IMR-90 (cell line): ENCODE measurements at regions of chr21 and their contacts with region 1.

Region 1: DNA sequence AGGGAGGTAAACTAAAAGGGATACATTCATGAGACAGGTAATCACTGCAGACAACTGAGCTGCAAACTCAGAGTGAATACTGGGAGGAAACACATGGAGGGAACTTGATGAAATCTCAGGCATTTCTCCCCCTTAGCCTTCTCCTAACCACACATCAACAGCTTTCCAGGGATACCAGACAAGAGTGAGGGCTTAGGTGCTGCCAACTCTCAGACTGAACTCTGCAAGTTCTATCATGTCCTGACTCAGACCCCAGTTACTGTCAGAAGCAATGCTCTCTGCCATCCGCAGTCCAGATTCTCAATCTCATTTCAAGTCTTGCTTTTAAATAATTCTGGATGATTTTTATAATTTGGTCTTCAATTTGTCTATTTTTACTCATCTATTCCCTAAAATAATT is 267.3 kb downstream of the LTN1 start:
- DNase-seq: no peak
- ATAC-seq: no peak
- H3K4me3 ChIP-seq: no peak overlapping the region
- H3K27ac ChIP-seq: no peak overlapping the region
- H3K4me1 ChIP-seq: 0 out of 2 replicates have a peak, but pooled peaks cover 2% of the 10 kb centered on the region
- H3K27me3 ChIP-seq: no peaks in the 10 kb centered on the region
- CTCF ChIP-seq: no peak
- POLR2A ChIP-seq: no peak
- RAD21 ChIP-seq: no peak

Region 2: DNA sequence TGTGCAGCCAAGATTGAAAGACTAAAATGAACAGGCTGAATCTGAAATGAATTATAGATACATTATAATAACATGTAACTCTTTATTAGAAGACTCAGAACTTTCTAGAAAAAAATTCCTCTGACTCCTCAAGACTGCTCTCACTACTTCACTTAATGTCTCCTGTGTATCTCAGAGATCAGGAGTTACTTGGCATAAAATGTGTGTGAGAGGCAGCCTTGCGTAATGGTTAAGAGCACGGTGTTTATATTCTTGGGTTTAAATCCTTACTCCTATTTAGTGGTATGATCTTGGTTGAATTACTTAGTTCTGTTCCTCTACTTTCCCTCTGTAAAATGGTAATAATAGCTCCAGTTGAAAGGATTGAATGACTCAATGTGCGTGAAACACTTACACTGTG is 367.7 kb before region 1 on chr21:
- CTCF ChIA-PET with region 1: no interaction called
- POLR2A ChIA-PET with region 1: no interaction called
- dilution Hi-C with region 1: no loop called
- in situ Hi-C with region 1: loop called (anchors 10 kb)
- intact Hi-C with region 1: no loop called
- DNase-seq: peak; percentile 38
- ATAC-seq: peak; percentile 40; the same call in 1 of the 2 replicates
- H3K4me3 ChIP-seq: no peak overlapping the region
- H3K27ac ChIP-seq: no peak overlapping the region
- H3K4me1 ChIP-seq: no peaks in the 10 kb centered on the region; the same call in none of the 2 replicates
- H3K27me3 ChIP-seq: no peaks in the 10 kb centered on the region
- CTCF ChIP-seq: no peak
- POLR2A ChIP-seq: no peak
- RAD21 ChIP-seq: no peak

Region 3: DNA sequence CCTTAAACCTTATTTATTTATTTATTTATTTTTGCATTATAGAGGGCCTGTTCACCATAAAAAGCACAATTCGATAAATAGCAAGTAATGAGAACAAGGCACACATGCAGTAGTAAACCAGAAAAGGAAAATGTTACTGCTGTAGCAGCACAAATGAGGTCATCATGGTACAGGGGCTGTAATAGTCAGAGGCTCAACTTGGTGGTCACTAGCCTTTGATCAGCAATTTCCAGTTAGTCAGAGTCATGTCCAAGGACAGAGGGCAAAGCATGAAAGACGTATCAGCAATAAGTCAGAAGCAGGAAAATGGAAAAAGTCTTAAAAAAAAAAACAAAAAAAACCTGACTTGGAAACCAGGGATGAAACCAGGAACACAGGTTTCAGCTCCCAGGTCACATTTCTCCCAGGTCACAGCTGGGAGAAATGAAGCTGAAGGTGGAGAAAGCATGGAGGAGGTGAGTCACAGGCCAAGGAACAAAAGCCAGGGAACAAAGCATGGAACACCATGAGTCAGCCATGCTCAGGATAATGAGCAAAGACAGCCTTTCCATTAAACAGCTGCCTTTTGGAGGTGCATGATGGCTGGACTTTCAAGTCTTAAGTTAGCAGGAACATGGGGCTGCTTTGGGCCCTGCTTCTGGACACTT is 289.0 kb before region 1 on chr21:
- CTCF ChIA-PET with region 1: no interaction called
- POLR2A ChIA-PET with region 1: no interaction called
- dilution Hi-C with region 1: no loop called
- in situ Hi-C with region 1: no loop called
- intact Hi-C with region 1: no loop called
- DNase-seq: peak; percentile 77
- ATAC-seq: 0 out of 2 replicates have a peak, but pooled peaks have one; percentile 30
- H3K4me3 ChIP-seq: no peak overlapping the region
- H3K27ac ChIP-seq: peak overlapping the region; percentile 37; the same call in 1 of the 2 replicates
- H3K4me1 ChIP-seq: peaks cover 10% of the 10 kb centered on the region
- H3K27me3 ChIP-seq: no peaks in the 10 kb centered on the region
- CTCF ChIP-seq: no peak
- POLR2A ChIP-seq: no peak
- RAD21 ChIP-seq: no peak

Region 4: DNA sequence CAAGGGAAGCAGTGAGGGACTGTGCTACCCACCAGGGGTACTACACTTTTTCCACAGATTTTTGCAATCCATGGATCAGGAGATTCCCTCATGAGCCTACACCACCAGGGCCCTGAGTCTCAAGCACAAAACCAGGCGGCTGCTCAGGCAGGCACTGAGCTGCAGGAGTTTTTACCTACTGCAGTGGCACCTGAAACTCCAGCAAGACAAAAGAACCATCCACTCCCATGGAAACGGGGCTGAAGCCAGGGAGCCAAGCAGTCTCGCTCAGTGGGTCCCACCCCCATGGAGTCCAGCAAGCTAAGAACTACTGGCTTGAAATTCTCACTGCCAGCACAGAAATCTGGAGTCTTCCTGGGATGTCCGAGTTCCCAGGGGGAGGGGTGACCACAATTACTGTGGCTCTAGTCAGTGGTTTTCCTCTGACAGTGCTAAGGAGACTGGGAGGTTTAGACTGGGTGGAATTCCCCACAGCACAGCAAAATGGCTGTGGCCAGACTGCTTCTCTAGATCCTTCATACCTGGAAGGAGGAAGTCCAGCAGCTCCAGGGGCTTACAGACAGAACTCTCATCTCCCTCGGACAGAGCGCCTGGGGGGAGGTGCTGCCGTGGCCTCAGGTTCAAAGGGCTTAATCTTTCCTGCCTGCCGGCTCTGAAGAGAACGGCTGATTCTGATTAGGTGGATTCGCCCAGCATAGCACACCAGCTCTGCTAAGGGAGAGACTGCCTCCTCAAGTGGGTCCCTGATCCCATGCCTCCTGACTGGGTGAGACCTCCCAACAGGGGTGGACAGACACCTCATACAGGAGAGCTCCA is 170.5 kb before region 1 on chr21:
- CTCF ChIA-PET with region 1: no interaction called
- POLR2A ChIA-PET with region 1: no interaction called
- dilution Hi-C with region 1: no loop called
- in situ Hi-C with region 1: no loop called
- intact Hi-C with region 1: no loop called
- DNase-seq: peak; percentile 63
- ATAC-seq: no peak
- H3K4me3 ChIP-seq: no peak overlapping the region
- H3K27ac ChIP-seq: no peak overlapping the region
- H3K4me1 ChIP-seq: peaks cover 3% of the 10 kb centered on the region
- H3K27me3 ChIP-seq: no peaks in the 10 kb centered on the region
- CTCF ChIP-seq: no peak
- POLR2A ChIP-seq: no peak
- RAD21 ChIP-seq: no peak

Region 5: DNA sequence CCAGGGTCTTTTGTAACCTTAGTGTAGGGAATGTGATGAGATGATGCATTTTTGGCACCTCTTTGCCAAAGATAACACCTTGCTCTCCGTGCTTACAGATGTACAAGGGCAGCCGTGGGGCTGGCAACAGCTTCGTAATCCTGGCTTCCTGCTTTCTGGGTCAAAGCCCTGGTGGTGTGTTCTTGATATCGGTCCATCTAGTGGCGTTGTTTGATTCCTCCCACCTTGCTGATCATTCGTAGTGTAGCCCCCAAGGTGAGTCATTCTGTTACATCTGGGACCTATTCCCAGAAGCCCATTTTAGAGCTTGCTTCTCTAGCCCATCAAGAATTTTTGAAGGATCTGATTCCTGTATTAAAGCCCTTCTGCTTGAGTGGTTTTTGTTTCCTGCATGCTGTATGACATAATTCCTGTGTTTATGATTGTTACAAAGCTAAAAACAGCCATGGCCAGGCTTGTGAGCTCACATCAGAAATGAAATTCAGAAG is 355.1 kb after region 1 on chr21:
- CTCF ChIA-PET with region 1: no interaction called
- POLR2A ChIA-PET with region 1: no interaction called
- dilution Hi-C with region 1: no loop called
- in situ Hi-C with region 1: no loop called
- intact Hi-C with region 1: no loop called
- DNase-seq: peak; percentile 37
- ATAC-seq: no peak
- H3K4me3 ChIP-seq: no peak overlapping the region
- H3K27ac ChIP-seq: no peak overlapping the region
- H3K4me1 ChIP-seq: peaks cover 9% of the 10 kb centered on the region
- H3K27me3 ChIP-seq: no peaks in the 10 kb centered on the region
- CTCF ChIP-seq: no peak
- POLR2A ChIP-seq: no peak
- RAD21 ChIP-seq: no peak